Motor neuron (in vitro differentiated cells): ENCODE measurements at regions of chr11 and their contacts with region 1.

Region 1: GRCh38 chr11:113289431-113290187 is 24.8 kb upstream of the TTC12 start:
- ATAC-seq: peak; percentile 90 to 97 (median 93)
- H3K4me3 ChIP-seq: no peak overlapping the region
- H3K27ac ChIP-seq: no peak overlapping the region
- H3K4me1 ChIP-seq: peaks cover 6 to 7% of the 10 kb centered on the region in 2 donors

Region 2: DNA sequence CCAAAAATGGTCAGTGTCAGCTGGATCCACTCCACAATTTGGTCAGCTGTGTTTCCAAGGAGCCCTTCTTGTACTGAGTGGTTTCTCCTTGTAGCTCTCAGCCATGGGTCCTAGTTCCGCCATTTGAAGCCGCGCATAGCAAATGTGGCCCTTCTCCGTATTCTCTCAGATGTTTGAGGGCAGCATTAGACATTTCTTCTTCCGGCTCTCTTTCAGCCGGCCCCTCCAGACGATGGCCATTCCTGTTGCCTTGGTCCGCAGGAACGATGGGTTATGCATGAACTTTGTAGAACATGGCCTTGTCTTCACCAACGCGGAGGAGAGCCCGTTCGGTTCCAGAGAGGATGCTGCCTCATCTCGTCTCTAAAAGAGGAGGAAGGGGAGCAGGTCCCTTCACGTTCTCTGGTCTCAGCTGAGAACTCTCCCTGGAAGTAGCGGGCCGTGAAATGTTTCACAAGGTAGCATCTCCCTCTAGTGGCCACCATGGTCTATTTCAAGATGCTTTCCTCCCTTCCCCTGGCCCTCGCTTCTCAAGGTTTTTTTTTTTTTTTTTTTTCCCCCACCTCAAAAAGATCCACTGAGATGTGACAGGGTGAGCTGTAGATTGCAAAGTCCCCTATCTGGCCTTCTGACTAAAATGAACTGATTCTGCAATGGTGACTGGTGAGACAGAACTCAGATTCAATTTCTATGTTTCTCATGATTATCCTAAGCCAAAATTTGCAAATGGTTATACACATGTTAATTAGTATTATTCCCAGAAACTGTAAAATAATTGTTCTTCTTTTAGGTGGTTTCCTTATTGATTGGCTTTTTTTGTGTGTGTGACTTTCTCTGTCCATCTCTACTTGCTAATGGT is 1009.1 kb before region 1 on chr11:
- in situ Hi-C with region 1: loop called in 5 of 9 experiments (anchors 25 kb)
- ATAC-seq: peak; percentile 86 to 94 (median 90)
- H3K4me3 ChIP-seq: peak overlapping the region in 3 of 5 donors; percentile 4 to 7 (median 7)
- H3K27ac ChIP-seq: no peak overlapping the region
- H3K4me1 ChIP-seq: peaks cover 4% of the 10 kb centered on the region in 2 donors

Region 3: GRCh38 chr11:112588252-112588694 is 701.3 kb before region 1 on chr11:
- in situ Hi-C with region 1: loop called in 6 of 9 experiments (anchors 25 kb)
- ATAC-seq: peak; percentile 87 to 98 (median 95)
- H3K4me3 ChIP-seq: no peak overlapping the region
- H3K27ac ChIP-seq: peak overlapping the region; percentile 31 to 47
- H3K4me1 ChIP-seq: peaks cover 37 to 43% of the 10 kb centered on the region in 2 donors

Region 4: GRCh38 chr11:112822478-112823274 is 466.9 kb before region 1 on chr11:
- in situ Hi-C with region 1: loop called in 1 of 9 experiments (anchors 25 kb)
- ATAC-seq: peak; percentile 70 to 96 (median 87)
- H3K4me3 ChIP-seq: no peak overlapping the region
- H3K27ac ChIP-seq: peak overlapping the region; percentile 36 to 56
- H3K4me1 ChIP-seq: peaks cover 16 to 20% of the 10 kb centered on the region in 2 donors

Region 5: GRCh38 chr11:113113801-113114706 is 175.6 kb before region 1 on chr11:
- in situ Hi-C with region 1: loop called in 1 of 9 experiments (anchors 25 kb)
- ATAC-seq: peak; percentile 81 to 99 (median 92)
- H3K4me3 ChIP-seq: no peak overlapping the region
- H3K27ac ChIP-seq: no peak overlapping the region
- H3K4me1 ChIP-seq: peaks cover 26 to 55% of the 10 kb centered on the region in 2 donors

Region 6: GRCh38 chr11:114075891-114076441 is 786.4 kb after region 1 on chr11:
- in situ Hi-C with region 1: no loop called
- ATAC-seq: peak in 6 of 8 experiments; percentile 15 to 75 (median 42)
- H3K4me3 ChIP-seq: peak overlapping the region in 1 of 5 donors; percentile 5
- H3K27ac ChIP-seq: peak overlapping the region in 1 of 2 donors; percentile 58
- H3K4me1 ChIP-seq: peaks cover 59 to 82% of the 10 kb centered on the region in 2 donors